ENCODE measurements at regions of chr16 and their contacts with region 1.

Region 1: DNA sequence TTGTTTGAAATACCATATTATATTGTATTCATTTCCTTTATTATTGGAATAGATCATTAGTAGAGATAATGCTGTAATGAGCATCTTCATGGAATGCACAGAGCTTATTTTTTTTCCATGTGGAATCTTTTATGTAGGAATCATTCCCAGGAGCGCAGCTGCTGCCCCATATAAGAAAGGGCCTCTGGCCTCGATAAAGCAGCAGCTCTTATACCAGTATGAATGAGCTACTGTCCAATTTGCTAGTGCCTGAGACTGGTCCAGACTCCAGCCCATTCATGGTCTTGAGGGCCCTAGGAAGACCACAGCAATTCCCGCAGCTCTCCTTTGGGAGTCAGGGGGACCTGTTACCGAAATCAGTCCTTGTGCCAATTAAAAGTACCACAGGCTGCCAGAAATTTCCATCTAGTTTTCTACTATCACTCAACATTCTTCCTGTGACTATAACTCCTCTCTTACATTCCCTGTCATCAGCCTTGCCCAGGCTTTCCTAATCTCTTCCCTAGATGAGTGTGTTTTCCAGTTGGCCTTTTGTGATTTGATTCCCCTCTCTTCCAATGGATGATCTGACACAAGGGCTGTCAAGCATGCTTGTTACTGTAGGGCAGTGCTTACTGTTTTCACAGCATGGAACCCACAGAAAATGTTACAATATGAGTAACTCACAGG is 1.9 kb downstream of the ZNF843 start:
- DNase-seq: no peak
- ATAC-seq: no peak
- H3K4me3 ChIP-seq: no peak overlapping the region
- H3K27ac ChIP-seq: no peak overlapping the region
- H3K4me1 ChIP-seq: no peaks in the 10 kb centered on the region
- H3K27me3 ChIP-seq: no peaks in the 10 kb centered on the region
- CTCF ChIP-seq: no peak

Region 2: GRCh38 chr16:30997000-30997886 is 443.4 kb before region 1 on chr16:
- CTCF ChIA-PET with region 1: no interaction called
- POLR2A ChIA-PET with region 1: no interaction called
- in situ Hi-C with region 1: no loop called
- intact Hi-C with region 1: loop called (anchors 10 kb)
- DNase-seq: peak; percentile 82
- ATAC-seq: peak; percentile 90
- H3K4me3 ChIP-seq: peak overlapping the region; percentile 54 to 79
- H3K27ac ChIP-seq: peak overlapping the region; percentile 95
- H3K4me1 ChIP-seq: peaks cover 33% of the 10 kb centered on the region
- H3K27me3 ChIP-seq: no peaks in the 10 kb centered on the region
- CTCF ChIP-seq: no peak

Region 3: GRCh38 chr16:31333686-31334649 is 106.7 kb before region 1 on chr16:
- CTCF ChIA-PET with region 1: interaction called, 3 read pairs
- POLR2A ChIA-PET with region 1: no interaction called
- in situ Hi-C with region 1: no loop called
- intact Hi-C with region 1: loop called (anchors 10 kb)
- DNase-seq: peak; percentile 27
- ATAC-seq: peak; percentile 91
- H3K4me3 ChIP-seq: no peak overlapping the region
- H3K27ac ChIP-seq: no peak overlapping the region
- H3K4me1 ChIP-seq: no peaks in the 10 kb centered on the region; the same call in 1 of the 2 replicates
- H3K27me3 ChIP-seq: peaks cover 9% of the 10 kb centered on the region
- CTCF ChIP-seq: peak; percentile 50

Region 4: GRCh38 chr16:31382485-31383161 is 58.0 kb before region 1 on chr16:
- CTCF ChIA-PET with region 1: no interaction called
- POLR2A ChIA-PET with region 1: no interaction called
- in situ Hi-C with region 1: no loop called
- intact Hi-C with region 1: no loop called
- DNase-seq: peak; percentile 8
- ATAC-seq: peak; percentile 83
- H3K4me3 ChIP-seq: no peak overlapping the region
- H3K27ac ChIP-seq: no peak overlapping the region
- H3K4me1 ChIP-seq: peaks cover 11% of the 10 kb centered on the region
- H3K27me3 ChIP-seq: no peaks in the 10 kb centered on the region
- CTCF ChIP-seq: peak; percentile 96

Region 5: DNA sequence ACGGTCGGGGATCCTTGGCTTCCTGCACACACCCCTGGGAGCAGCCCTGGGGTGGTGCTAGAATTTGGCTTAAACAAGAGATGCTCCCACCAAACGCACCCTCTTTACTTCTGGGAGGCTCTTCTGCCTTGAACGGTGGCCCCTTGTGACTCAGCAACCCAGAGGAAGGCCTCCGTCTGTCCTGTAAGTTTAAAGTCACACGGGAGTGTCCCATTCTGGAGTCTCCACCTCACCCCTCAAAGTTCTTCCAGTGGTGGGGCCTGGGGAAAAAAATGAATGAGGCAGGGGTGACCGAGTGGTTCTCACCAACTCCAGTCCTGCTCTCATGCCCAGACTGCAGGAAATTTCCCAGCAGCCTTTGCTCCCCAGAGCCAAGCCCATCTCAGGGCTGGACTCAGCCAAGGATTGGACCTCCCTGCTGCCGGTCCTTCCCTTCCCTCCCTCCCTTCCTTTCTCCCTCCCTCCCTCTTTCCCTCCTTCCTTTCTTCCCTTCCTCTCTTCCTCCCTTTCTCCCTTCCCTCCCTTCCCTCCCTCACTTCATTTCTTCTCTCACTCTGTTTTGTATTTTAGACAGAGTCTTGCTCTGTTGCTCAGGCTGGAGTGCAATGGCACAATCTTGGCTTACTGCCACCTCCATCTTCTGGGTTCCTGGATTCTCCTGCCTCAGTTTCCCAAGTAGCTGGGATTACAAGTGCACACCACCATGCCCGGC is 36.1 kb before region 1 on chr16:
- CTCF ChIA-PET with region 1: no interaction called
- POLR2A ChIA-PET with region 1: no interaction called
- in situ Hi-C with region 1: no loop called
- intact Hi-C with region 1: no loop called
- DNase-seq: no peak
- ATAC-seq: peak; percentile 87
- H3K4me3 ChIP-seq: peak overlapping the region; percentile 46 to 54
- H3K27ac ChIP-seq: peak overlapping the region; percentile 51
- H3K4me1 ChIP-seq: no peaks in the 10 kb centered on the region
- H3K27me3 ChIP-seq: no peaks in the 10 kb centered on the region
- CTCF ChIP-seq: no peak

Region 6: GRCh38 chr16:31458844-31459721 is 18.4 kb after region 1 on chr16 and contains the start of gene ARMC5:
- CTCF ChIA-PET with region 1: no interaction called
- POLR2A ChIA-PET with region 1: no interaction called
- in situ Hi-C with region 1: no loop called
- intact Hi-C with region 1: no loop called
- DNase-seq: peak; percentile 88
- ATAC-seq: peak; percentile 92
- H3K4me3 ChIP-seq: peak within 1 kb of the TSS; percentile 78 to 93
- H3K27ac ChIP-seq: peak within 1 kb of the TSS; percentile 94
- H3K4me1 ChIP-seq: peaks cover 34% of the 10 kb centered on the region
- H3K27me3 ChIP-seq: no peaks in the 10 kb centered on the region
- CTCF ChIP-seq: peak; percentile 87
- total RNA-seq, gene ARMC5: 19.8 TPM